PC-3 (cell line): ENCODE measurements at regions of chr1 and their contacts with region 1.

Region 1: GRCh38 chr1:67500413-67500959 is 70.3 kb upstream of the SERBP1 start:
- DNase-seq: peak; percentile 94
- ATAC-seq: peak; percentile 99
- H3K4me3 ChIP-seq: peak overlapping the region; percentile 44
- H3K27ac ChIP-seq: no peak overlapping the region
- H3K4me1 ChIP-seq: no peaks in the 10 kb centered on the region
- H3K27me3 ChIP-seq: no peaks in the 10 kb centered on the region
- CTCF ChIP-seq: peak; percentile 97

Region 2: GRCh38 chr1:66764994-66765578 is 735.4 kb before region 1 on chr1:
- CTCF ChIA-PET with region 1: no interaction called
- POLR2A ChIA-PET with region 1: no interaction called
- intact Hi-C with region 1: loop called (anchors 10 kb)
- DNase-seq: peak; percentile 65
- ATAC-seq: peak; percentile 66
- H3K4me3 ChIP-seq: no peak overlapping the region
- H3K27ac ChIP-seq: no peak overlapping the region
- H3K4me1 ChIP-seq: no peaks in the 10 kb centered on the region
- H3K27me3 ChIP-seq: no peaks in the 10 kb centered on the region
- CTCF ChIP-seq: peak; percentile 92

Region 3: DNA sequence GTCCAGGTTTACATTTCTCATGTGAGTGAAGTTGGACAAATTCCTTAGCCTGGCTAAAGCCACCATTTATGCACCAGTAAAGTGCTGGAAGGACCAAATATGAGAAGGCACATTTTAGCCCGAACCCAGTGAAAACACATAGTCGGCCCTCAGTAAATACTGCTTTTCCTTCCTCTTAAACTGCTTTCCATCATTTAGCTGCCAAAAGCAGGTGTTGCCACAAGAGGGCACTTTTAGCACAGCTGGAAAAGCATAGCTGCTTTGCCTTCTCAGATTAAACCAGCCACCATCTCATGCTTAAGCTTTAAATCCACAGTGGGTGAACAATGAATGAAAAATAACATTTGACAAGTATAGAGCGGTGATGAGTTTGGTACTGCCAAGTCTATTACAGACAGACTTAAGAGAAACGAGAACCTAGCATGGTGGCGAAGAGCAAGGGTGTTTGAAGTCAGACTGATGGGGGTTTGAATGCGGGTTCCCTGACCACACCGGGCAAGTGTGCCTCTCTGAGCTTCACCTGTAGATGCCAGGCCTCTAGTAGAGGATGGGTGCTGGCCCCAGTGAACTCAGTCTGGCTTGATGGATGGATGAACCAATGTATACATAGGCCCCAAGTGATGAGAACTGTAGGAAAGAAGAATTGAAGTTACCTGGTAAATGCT is 504.3 kb before region 1 on chr1:
- CTCF ChIA-PET with region 1: no interaction called
- POLR2A ChIA-PET with region 1: no interaction called
- intact Hi-C with region 1: loop called (anchors 5 kb)
- DNase-seq: peak; percentile 81
- ATAC-seq: peak; percentile 79
- H3K4me3 ChIP-seq: no peak overlapping the region
- H3K27ac ChIP-seq: no peak overlapping the region
- H3K4me1 ChIP-seq: no peaks in the 10 kb centered on the region
- H3K27me3 ChIP-seq: no peaks in the 10 kb centered on the region
- CTCF ChIP-seq: peak; percentile 93

Region 4: GRCh38 chr1:67214420-67215174 is 285.9 kb before region 1 on chr1:
- CTCF ChIA-PET with region 1: interaction called, 18 read pairs
- POLR2A ChIA-PET with region 1: no interaction called
- intact Hi-C with region 1: loop called (anchors 1 kb)
- DNase-seq: peak; percentile 68
- ATAC-seq: peak; percentile 60
- H3K4me3 ChIP-seq: no peak overlapping the region
- H3K27ac ChIP-seq: no peak overlapping the region
- H3K4me1 ChIP-seq: no peaks in the 10 kb centered on the region
- H3K27me3 ChIP-seq: no peaks in the 10 kb centered on the region
- CTCF ChIP-seq: peak; percentile 79

Region 5: DNA sequence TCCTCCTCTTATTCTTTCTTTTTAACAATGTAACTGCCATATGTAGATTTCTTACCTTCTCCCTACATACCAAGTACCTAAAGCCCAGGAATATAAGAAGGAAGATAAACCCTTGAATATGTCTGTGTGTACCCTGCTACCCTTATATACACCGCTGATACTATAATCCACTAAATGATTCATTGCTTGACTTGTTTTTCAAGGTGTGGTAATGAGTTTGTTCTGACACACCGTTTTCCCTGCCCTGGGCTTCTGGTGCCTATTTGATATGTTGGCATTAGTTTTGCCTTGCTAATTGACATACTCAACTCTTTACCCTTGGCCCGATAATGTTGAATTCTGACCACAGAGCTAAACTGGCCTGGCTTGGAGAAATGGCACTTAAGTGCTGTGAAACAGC is 269.9 kb before region 1 on chr1:
- CTCF ChIA-PET with region 1: interaction called, 3 read pairs
- POLR2A ChIA-PET with region 1: no interaction called
- intact Hi-C with region 1: loop called (anchors 1 kb)
- DNase-seq: peak; percentile 72
- ATAC-seq: peak; percentile 66
- H3K4me3 ChIP-seq: no peak overlapping the region
- H3K27ac ChIP-seq: peak overlapping the region; percentile 47
- H3K4me1 ChIP-seq: peaks cover 26% of the 10 kb centered on the region
- H3K27me3 ChIP-seq: no peaks in the 10 kb centered on the region
- CTCF ChIP-seq: no peak

Region 6: DNA sequence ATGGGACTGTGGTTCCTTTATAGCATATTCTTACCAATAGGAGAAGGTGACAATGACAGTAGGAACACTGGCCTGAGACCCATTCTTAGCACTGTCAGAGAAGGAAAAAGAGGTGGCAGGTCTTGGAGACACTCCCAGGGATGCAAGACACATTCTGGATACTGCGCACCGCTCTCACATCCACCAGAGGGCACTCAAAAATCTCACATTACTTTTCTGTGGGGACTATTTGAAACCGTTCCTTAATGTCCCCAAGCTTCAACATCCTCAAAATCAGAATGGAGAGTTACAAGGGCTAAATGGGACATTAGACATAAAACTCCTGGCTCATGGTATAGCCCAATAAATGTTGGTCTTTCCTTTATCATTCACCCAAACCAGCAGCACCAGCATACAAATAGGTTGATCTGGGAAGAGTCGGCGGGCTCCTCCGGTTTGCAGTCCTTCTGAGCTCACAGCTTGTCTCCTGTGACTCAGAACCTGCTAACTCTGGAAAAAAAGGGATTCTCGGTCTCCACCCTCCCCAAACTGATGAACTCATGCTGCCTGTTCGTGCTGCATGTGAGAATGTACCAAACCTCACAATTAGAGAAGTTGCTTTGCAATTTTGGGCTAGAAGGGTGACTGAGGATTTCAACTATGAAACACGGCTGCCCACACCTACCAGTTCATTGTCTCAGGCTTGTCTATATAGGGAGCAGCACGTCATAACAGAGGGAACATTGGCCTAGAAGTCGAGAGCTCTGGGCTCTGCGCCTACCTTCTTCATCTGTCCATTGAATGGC is 152.6 kb before region 1 on chr1:
- CTCF ChIA-PET with region 1: interaction called, 15 read pairs
- POLR2A ChIA-PET with region 1: no interaction called
- intact Hi-C with region 1: loop called (anchors 1 kb)
- DNase-seq: peak; percentile 76
- ATAC-seq: peak; percentile 94
- H3K4me3 ChIP-seq: peak overlapping the region; percentile 41; the same call in 1 of the 2 replicates
- H3K27ac ChIP-seq: no peak overlapping the region
- H3K4me1 ChIP-seq: peaks cover 13% of the 10 kb centered on the region
- H3K27me3 ChIP-seq: no peaks in the 10 kb centered on the region
- CTCF ChIP-seq: peak; percentile 92

Region 7: GRCh38 chr1:67404212-67404620 is 96.3 kb before region 1 on chr1:
- CTCF ChIA-PET with region 1: no interaction called
- POLR2A ChIA-PET with region 1: no interaction called
- intact Hi-C with region 1: no loop called
- DNase-seq: no peak
- ATAC-seq: no peak
- H3K4me3 ChIP-seq: no peak overlapping the region
- H3K27ac ChIP-seq: no peak overlapping the region
- H3K4me1 ChIP-seq: peaks cover 11% of the 10 kb centered on the region
- H3K27me3 ChIP-seq: no peaks in the 10 kb centered on the region
- CTCF ChIP-seq: no peak